ENCODE measurements at regions of chr6 and their contacts with region 1.

Region 1: DNA sequence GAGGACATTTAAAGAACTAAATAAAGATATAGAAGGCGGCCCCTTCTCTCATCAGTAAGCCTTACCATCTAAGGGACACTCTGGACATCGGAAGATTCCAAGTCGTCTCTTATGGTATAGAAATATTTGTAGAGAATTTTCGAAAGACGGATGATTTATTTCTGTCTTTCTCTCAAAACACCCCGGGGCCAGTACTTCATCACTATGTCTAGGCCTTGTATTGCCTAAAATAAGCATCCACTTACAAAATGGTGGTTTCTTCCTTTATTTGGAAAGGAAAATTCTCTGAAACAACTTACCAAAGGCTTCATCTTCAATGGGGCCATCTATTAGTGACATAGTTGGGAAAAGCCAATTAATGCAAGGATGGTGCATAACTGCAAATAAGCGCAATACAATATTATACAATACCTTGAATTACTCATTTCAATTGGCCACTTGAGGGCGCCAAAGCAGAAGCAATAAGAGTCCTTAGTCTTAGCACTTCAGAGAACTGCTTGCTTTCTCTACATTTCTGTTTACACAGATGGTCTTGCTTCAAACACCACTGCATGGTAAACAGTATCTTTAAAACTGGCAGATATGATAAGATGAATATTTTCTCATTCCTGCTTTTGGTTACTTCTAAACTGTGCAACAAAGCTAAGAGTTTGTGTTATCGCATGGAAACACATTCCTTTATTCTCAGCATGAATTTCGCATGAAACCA is 113.2 kb downstream of the VIP start:
- DNase-seq: peak; percentile 20
- H3K4me3 ChIP-seq: no peak overlapping the region
- H3K27me3 ChIP-seq: no peaks in the 10 kb centered on the region
- CTCF ChIP-seq: peak; percentile 66

Region 2: DNA sequence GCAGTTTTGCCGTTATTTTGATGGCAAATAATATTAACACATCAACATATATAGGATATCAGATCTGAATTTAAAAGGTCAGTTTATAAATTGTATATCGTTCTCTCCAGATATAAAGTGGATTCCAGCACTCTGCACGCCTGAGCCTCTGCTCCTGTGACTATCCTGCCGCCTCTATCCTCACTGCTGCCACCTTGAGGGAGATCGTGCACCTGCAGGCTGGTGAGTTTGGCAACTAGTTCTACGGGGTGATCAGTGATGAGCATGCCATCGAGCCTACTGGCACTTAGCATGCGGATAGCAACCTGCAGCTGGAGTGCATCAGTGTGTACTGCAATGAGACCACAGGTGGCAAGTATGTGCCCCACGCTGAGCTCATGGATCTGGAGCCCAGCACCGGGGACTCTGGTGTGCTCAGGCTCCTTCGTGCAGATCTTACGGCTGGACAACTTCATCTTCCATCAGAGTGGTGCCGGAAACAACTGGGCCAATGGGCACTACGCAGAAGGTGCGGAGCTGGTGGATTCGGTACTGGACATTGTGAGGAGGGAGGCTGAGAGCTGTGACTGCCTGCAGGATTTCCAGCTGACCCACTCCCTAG is 34.1 kb after region 1 on chr6:
- CTCF ChIA-PET with region 1: interaction called, 11 read pairs
- POLR2A ChIA-PET with region 1: no interaction called
- DNase-seq: no peak
- H3K4me3 ChIP-seq: no peak overlapping the region
- H3K27me3 ChIP-seq: no peaks in the 10 kb centered on the region
- CTCF ChIP-seq: peak; percentile 94

Region 3: DNA sequence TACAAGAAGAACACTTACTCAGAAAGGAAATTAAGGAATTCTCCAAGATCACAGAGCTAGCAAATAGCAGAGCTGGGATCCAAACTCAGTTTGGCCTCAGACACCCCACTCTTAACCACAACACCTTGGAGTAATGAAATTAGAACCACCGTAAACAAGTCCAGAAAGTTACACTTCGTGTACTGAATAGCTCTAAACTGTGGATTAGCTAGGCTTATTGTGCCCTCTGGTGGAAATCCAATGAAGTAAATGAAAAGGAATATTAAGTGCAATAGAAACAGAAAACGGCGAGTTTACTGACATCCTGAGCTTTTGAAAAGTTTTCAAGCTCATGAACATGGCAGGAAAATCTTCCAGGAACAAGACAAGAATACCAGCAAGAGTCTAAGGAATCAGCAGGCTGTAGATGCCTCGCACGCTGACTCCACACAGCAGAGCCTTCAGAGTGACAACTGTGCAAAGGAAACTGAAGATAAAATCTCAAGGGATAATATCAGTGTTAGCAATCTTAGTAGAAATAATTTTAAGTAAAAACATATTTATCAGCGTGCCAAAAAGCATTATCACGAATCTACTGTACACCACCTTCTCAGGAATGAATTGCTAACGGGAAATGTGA is 84.5 kb after region 1 on chr6:
- CTCF ChIA-PET with region 1: interaction called, 27 read pairs
- POLR2A ChIA-PET with region 1: no interaction called
- DNase-seq: no peak
- H3K4me3 ChIP-seq: no peak overlapping the region
- H3K27me3 ChIP-seq: no peaks in the 10 kb centered on the region; the same call in 1 of the 2 replicates
- CTCF ChIP-seq: peak; percentile 74

Region 4: DNA sequence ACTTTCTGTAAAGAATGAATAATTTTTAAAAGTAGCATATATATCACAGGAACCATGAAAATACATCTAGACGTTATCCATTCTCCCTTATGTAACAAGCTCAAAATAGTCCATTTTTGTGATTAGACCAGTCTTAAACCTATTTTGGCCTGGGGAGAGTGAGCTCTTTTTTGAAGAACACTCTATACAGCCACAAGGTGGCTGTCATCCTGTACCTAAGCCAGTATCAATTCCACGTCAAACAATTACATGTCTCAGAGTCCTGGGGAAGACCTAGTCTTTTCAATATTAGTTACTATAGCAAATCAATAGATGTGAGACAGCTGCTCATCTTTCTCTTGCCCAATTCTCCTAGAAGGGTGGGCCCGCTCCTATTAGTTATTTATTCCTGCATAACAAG is 90.7 kb after region 1 on chr6:
- CTCF ChIA-PET with region 1: interaction called, 27 read pairs
- POLR2A ChIA-PET with region 1: no interaction called
- DNase-seq: no peak
- H3K4me3 ChIP-seq: no peak overlapping the region
- H3K27me3 ChIP-seq: no peaks in the 10 kb centered on the region
- CTCF ChIP-seq: no peak

Region 5: DNA sequence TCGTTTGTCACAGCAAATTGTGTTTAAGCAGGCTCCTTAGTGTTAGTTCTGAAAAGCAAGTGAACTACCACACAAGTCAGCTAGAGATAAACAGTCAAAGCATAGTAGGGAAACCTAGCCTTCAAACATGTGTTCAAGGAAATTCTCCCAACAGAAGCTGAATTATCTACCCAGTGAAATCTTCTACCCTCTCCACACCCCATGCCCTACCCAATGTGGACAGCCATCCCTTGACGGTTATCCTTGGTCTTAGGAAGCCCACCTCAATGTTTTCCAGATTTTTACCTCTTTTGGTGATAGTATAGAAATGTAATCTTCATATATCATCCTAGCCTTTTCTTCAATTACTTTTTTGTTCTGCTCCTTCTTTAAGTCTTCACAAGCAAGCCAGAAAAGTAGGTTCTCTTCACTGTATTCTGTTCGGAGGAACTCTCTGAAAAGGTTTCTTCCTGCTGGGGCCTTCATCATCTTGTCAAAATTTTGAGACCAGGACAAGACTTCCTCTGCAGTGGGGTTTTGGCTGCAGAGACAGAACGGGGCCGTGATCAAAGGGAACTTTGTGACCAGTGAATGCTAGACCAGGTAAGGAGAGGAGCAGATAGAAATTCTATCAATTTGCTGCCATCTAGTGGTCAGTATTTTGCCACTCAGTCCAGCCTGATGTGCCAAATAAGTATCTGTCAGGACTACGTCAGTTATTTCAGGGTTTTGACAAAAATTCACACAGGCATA is 160.4 kb after region 1 on chr6:
- CTCF ChIA-PET with region 1: interaction called, 12 read pairs
- POLR2A ChIA-PET with region 1: no interaction called
- DNase-seq: no peak
- H3K4me3 ChIP-seq: no peak overlapping the region
- H3K27me3 ChIP-seq: no peaks in the 10 kb centered on the region
- CTCF ChIP-seq: peak; percentile 80

Measured in BJ (cell line).